Activated CD4-positive, alpha-beta T cell treated with anti-CD3 and anti-CD28 coated beads for 36 hours (primary cell): ENCODE measurements at regions of chr1 and their contacts with region 1.

Region 1: DNA sequence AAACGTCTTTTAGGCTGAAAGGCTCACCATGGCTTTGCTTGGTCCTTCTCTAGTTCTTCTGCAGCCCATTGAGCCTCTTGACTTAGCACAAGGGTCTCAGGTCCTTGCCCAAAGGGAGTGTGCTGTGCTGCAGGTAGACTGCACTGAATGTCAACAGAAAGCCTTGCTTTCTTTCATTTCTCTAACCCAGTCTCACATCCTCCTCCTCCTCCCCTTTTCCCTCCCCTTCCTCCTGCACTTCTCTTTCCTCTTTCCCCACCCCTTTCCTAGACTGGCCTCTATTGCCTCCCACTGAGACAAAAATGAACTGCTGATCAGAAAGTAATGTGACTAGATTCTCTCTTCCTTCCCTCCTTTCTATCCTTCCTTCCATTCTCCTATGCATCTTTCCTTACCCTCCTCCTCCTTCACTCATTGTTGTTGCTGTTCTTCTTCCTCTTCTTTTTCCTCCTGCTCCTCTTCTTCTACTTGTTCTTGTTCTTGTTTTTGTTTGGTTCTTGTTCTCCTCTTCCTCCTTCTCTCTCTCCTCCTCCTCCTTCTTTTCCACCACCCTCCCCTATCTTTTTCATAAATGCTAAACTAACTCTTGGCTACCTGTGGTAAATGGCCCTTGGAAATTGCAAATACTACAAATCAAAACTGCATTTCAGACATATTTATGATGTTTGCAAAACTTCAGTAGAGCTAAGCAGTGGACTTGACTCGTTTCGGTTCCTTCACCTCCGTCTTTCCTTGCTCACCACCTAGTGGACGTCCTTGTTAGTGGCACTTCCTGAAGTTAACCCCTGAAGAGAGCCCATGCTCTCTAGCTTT is at the start of gene SELL:
- DNase-seq: peak; percentile 86
- ATAC-seq: peak; percentile 77
- H3K4me3 Mint-ChIP-seq: peak within 1 kb of the TSS; percentile 83
- H3K27ac Mint-ChIP-seq: peak within 1 kb of the TSS; percentile 93
- H3K4me1 Mint-ChIP-seq: peaks cover 23% of the 10 kb centered on the region
- H3K27me3 Mint-ChIP-seq: peaks cover 4% of the 10 kb centered on the region
- total RNA-seq, gene SELL: 206 to 262 TPM

Region 2: DNA sequence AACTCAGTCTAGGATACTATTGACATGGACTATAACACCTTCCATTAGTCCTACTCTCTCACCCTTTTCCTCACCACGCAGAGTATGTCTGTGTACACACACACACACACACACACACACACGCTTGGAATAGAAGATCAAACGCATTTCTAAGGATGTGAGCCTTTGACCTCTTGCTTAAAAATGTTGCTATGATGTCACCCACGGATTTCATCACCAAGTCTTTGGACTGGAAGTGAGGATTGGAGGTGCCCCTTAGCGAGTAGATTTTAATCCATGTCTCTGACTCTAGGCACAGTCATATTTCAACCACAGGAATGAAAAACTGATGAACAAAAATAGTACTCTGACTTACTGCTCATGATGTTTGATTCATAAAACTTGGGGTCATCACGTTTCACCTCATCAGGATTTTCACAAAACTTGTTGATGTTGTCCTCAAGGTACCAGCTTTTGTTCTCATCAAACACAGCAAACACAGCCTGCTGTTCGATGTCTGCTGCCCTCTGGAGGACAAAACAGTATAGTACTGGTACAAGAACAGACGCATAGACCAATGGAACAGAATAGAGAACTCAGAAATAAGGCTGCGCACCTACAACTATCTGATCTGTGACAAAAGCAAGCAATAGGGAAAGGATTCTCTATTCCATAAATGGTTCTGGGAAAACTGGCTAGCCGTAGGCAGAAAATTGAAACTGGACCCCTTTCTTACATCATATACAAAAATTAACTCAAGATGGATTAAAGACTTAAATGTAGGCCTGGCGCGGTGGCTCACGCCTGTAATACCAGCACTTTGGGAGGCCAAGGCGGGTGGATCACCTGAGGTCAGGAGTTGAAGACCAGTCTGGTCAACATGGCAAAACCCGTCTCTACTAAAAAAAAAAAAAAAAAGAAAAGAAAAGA is 165.3 kb before region 1 on chr1:
- CTCF ChIA-PET with region 1: interaction called, 46 read pairs
- POLR2A ChIA-PET with region 1: no interaction called
- intact Hi-C with region 1: loop called (anchors 1 kb)
- DNase-seq: peak; percentile 57
- ATAC-seq: peak; percentile 81
- H3K4me3 Mint-ChIP-seq: no peak overlapping the region
- H3K27ac Mint-ChIP-seq: peak overlapping the region; percentile 2
- H3K4me1 Mint-ChIP-seq: no peaks in the 10 kb centered on the region
- H3K27me3 Mint-ChIP-seq: no peaks in the 10 kb centered on the region

Region 3: GRCh38 chr1:169586395-169587255 is 125.0 kb before region 1 on chr1 and contains the start of gene F5:
- CTCF ChIA-PET with region 1: interaction called, 77 read pairs
- POLR2A ChIA-PET with region 1: interaction called, 9 read pairs
- intact Hi-C with region 1: loop called (anchors 1 kb)
- DNase-seq: peak; percentile 92
- ATAC-seq: peak; percentile 87
- H3K4me3 Mint-ChIP-seq: peak within 1 kb of the TSS; percentile 95
- H3K27ac Mint-ChIP-seq: peak within 1 kb of the TSS; percentile 97
- H3K4me1 Mint-ChIP-seq: peaks cover 65% of the 10 kb centered on the region
- H3K27me3 Mint-ChIP-seq: no peaks in the 10 kb centered on the region
- total RNA-seq, gene F5: 49.8 to 57.8 TPM

Region 4: DNA sequence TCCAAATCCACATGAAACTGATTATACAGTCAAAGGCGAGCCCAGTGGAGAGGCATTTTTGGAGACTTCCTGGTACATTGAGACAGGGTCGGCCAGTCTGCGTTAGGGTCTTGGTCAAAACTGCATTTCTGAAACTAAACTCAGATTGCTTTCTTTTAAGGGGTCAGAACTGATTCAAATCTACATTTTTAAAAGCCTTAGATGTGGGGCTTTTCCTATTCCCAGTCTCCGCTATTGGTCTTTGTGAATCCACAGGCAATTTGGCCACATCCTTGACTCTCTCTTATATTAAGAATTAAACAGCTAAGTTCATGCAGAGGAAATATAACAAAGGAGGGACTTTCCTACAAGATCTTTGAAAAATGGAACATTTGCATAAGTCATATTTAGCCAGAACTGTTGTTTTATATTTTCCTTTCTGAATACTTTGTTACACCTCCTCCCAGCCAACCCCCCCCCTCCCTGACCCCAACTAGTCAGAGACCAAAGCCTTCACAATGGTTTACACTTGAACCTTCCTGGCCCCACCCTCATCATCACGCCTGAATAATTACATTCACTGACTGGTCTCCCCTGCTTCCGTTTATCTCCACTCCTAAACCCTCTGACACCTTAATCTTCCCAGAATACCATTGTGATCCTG is 31.2 kb before region 1 on chr1:
- CTCF ChIA-PET with region 1: interaction called, 18 read pairs
- POLR2A ChIA-PET with region 1: no interaction called
- intact Hi-C with region 1: no loop called
- DNase-seq: peak; percentile 80
- ATAC-seq: peak; percentile 84
- H3K4me3 Mint-ChIP-seq: peak overlapping the region; percentile 57
- H3K27ac Mint-ChIP-seq: peak overlapping the region; percentile 95
- H3K4me1 Mint-ChIP-seq: peaks cover 64% of the 10 kb centered on the region
- H3K27me3 Mint-ChIP-seq: no peaks in the 10 kb centered on the region

Region 5: DNA sequence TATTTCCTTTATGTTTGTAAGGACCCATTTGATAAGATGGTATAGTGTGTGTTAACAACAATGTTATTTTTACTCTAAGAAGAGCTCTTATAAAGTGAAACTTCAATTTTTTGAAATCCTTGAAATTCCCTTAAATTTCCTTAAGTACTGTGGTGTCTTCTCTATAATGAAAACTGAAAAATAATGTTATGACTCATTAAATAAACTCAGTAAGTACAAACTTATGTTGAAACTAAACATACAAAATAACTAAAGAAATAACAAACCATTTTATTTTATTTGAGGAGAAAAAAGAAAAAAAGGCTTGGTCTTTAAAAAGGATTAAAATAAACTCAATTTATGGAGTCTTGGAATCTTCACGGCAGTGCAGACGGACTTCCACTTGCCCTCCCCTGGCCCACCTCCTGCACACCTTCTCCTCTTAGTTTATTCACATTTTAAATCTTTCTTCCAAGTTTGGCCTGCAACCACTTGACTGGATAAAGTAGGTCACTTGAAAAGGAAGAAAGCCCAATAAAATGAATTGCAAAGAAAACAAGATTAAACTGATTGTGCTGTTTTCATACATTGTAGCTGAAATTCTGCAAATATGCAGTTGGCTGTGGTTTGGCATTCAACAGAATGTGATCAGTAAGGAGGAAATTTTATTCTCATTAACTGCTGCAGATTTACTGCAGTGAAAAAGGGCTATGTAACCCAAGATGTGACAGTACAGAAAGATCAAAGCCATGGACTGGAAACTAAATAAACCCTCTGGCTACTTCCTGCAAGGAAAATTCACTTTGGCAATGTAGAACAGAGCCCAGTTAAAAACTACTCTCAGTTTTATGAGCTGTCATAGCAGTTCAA is 230.5 kb after region 1 on chr1:
- CTCF ChIA-PET with region 1: no interaction called
- POLR2A ChIA-PET with region 1: no interaction called
- intact Hi-C with region 1: no loop called
- DNase-seq: no peak
- ATAC-seq: no peak
- H3K4me3 Mint-ChIP-seq: no peak overlapping the region
- H3K27ac Mint-ChIP-seq: no peak overlapping the region
- H3K4me1 Mint-ChIP-seq: no peaks in the 10 kb centered on the region
- H3K27me3 Mint-ChIP-seq: no peaks in the 10 kb centered on the region

Region 6: GRCh38 chr1:170074250-170075157 is 362.8 kb after region 1 on chr1 and contains the start of gene KIFAP3:
- CTCF ChIA-PET with region 1: no interaction called
- POLR2A ChIA-PET with region 1: no interaction called
- intact Hi-C with region 1: loop called in 1 of 2 experiments (anchors 10 kb)
- DNase-seq: peak; percentile 98
- ATAC-seq: peak; percentile 99
- H3K4me3 Mint-ChIP-seq: peak within 1 kb of the TSS; percentile 96
- H3K27ac Mint-ChIP-seq: peak within 1 kb of the TSS; percentile 87
- H3K4me1 Mint-ChIP-seq: peaks cover 43% of the 10 kb centered on the region
- H3K27me3 Mint-ChIP-seq: no peaks in the 10 kb centered on the region
- total RNA-seq, gene KIFAP3: 10.9 to 11.5 TPM